ENCODE measurements at regions of chr20 and their contacts with region 1.

Region 1: GRCh38 chr20:18005231-18006109 is 36.7 kb downstream of the MGME1 start:
- DNase-seq: peak; percentile 26
- ATAC-seq: peak; percentile 86
- H3K4me3 Mint-ChIP-seq: peak overlapping the region; percentile 67
- H3K27ac Mint-ChIP-seq: peak overlapping the region; percentile 81
- H3K4me1 Mint-ChIP-seq: peaks cover 33% of the 10 kb centered on the region
- H3K27me3 Mint-ChIP-seq: no peaks in the 10 kb centered on the region
- CTCF ChIP-seq: no peak

Region 2: GRCh38 chr20:18019070-18019469 is 13.6 kb after region 1 on chr20:
- CTCF ChIA-PET with region 1: interaction called, 4 read pairs
- POLR2A ChIA-PET with region 1: no interaction called
- intact Hi-C with region 1: loop called (anchors 1 kb)
- DNase-seq: no peak
- ATAC-seq: peak; percentile 78
- H3K4me3 Mint-ChIP-seq: no peak overlapping the region
- H3K27ac Mint-ChIP-seq: no peak overlapping the region
- H3K4me1 Mint-ChIP-seq: peaks cover 3% of the 10 kb centered on the region
- H3K27me3 Mint-ChIP-seq: no peaks in the 10 kb centered on the region
- CTCF ChIP-seq: no peak

Measured in activated B cell treated with CpG ODN at 0.5 μM for 24 hours (primary cell).